ENCODE measurements at regions of chr21 and their contacts with region 1.

Region 1: GRCh38 chr21:32770871-32771523 is 558 bp downstream of the PAXBP1 start:
- DNase-seq: peak; percentile 70
- ATAC-seq: peak; percentile 31
- H3K4me3 Mint-ChIP-seq: peak overlapping the region; percentile 97
- H3K27ac Mint-ChIP-seq: peak overlapping the region; percentile 94
- H3K4me1 Mint-ChIP-seq: peaks cover 51% of the 10 kb centered on the region
- H3K27me3 Mint-ChIP-seq: no peaks in the 10 kb centered on the region
- CTCF ChIP-seq: no peak

Region 2: GRCh38 chr21:32520875-32521735 is 249.9 kb before region 1 on chr21:
- CTCF ChIA-PET with region 1: no interaction called
- POLR2A ChIA-PET with region 1: no interaction called
- intact Hi-C with region 1: no loop called
- DNase-seq: no peak
- ATAC-seq: no peak
- H3K4me3 Mint-ChIP-seq: no peak overlapping the region
- H3K27ac Mint-ChIP-seq: no peak overlapping the region
- H3K4me1 Mint-ChIP-seq: no peaks in the 10 kb centered on the region
- H3K27me3 Mint-ChIP-seq: no peaks in the 10 kb centered on the region
- CTCF ChIP-seq: no peak

Region 3: GRCh38 chr21:32727687-32728455 is 43.1 kb before region 1 on chr21 and contains the start of gene SYNJ1:
- CTCF ChIA-PET with region 1: interaction called, 8 read pairs
- POLR2A ChIA-PET with region 1: interaction called, 51 read pairs
- intact Hi-C with region 1: loop called (anchors 5 kb)
- DNase-seq: peak; percentile 96
- ATAC-seq: peak; percentile 92
- H3K4me3 Mint-ChIP-seq: peak within 1 kb of the TSS; percentile 99
- H3K27ac Mint-ChIP-seq: peak within 1 kb of the TSS; percentile 96
- H3K4me1 Mint-ChIP-seq: peaks cover 45% of the 10 kb centered on the region
- H3K27me3 Mint-ChIP-seq: no peaks in the 10 kb centered on the region
- CTCF ChIP-seq: no peak
- total RNA-seq, gene SYNJ1: 8.7 to 10.9 TPM

Region 4: GRCh38 chr21:32747396-32747795 is 23.6 kb before region 1 on chr21:
- CTCF ChIA-PET with region 1: interaction called, 5 read pairs
- POLR2A ChIA-PET with region 1: interaction called, 16 read pairs
- intact Hi-C with region 1: no loop called
- DNase-seq: no peak
- ATAC-seq: peak; percentile 42
- H3K4me3 Mint-ChIP-seq: no peak overlapping the region
- H3K27ac Mint-ChIP-seq: peak overlapping the region; percentile 58
- H3K4me1 Mint-ChIP-seq: peaks cover 50% of the 10 kb centered on the region
- H3K27me3 Mint-ChIP-seq: no peaks in the 10 kb centered on the region
- CTCF ChIP-seq: no peak

Region 5: GRCh38 chr21:32757804-32758203 is 13.2 kb before region 1 on chr21:
- CTCF ChIA-PET with region 1: interaction called, 5 read pairs
- POLR2A ChIA-PET with region 1: interaction called, 14 read pairs
- intact Hi-C with region 1: no loop called
- DNase-seq: no peak
- ATAC-seq: no peak
- H3K4me3 Mint-ChIP-seq: no peak overlapping the region
- H3K27ac Mint-ChIP-seq: no peak overlapping the region
- H3K4me1 Mint-ChIP-seq: peaks cover 13% of the 10 kb centered on the region
- H3K27me3 Mint-ChIP-seq: no peaks in the 10 kb centered on the region
- CTCF ChIP-seq: no peak

Measured in activated CD8-positive, alpha-beta T cell treated with anti-CD3 and anti-CD28 coated beads for 36 hours (primary cell).